Activated CD4-positive, alpha-beta T cell treated with anti-CD3 and anti-CD28 coated beads for 36 hours (primary cell): ENCODE measurements at regions of chr4 and their contacts with region 1.

Region 1: GRCh38 chr4:183659029-183659871 is at the starts of genes RWDD4 and TRAPPC11:
- DNase-seq: peak; percentile 97
- ATAC-seq: peak; percentile 100
- H3K4me3 Mint-ChIP-seq: peak within 1 kb of the TSS; percentile 97
- H3K27ac Mint-ChIP-seq: peak within 1 kb of the TSS; percentile 95
- H3K4me1 Mint-ChIP-seq: peaks cover 35% of the 10 kb centered on the region
- H3K27me3 Mint-ChIP-seq: no peaks in the 10 kb centered on the region
- total RNA-seq, gene RWDD4: 19.4 to 26.5 TPM
- total RNA-seq, gene TRAPPC11: 27.7 to 37.9 TPM

Region 2: GRCh38 chr4:182917182-182918043 is 741.8 kb before region 1 on chr4 and contains the start of gene DCTD:
- CTCF ChIA-PET with region 1: no interaction called
- POLR2A ChIA-PET with region 1: no interaction called
- intact Hi-C with region 1: loop called in 1 of 2 experiments (anchors 10 kb)
- DNase-seq: peak; percentile 89
- ATAC-seq: peak; percentile 69
- H3K4me3 Mint-ChIP-seq: peak within 1 kb of the TSS; percentile 79
- H3K27ac Mint-ChIP-seq: peak within 1 kb of the TSS; percentile 95
- H3K4me1 Mint-ChIP-seq: peaks cover 48% of the 10 kb centered on the region
- H3K27me3 Mint-ChIP-seq: no peaks in the 10 kb centered on the region
- total RNA-seq, gene DCTD: 119 to 128 TPM

Region 3: GRCh38 chr4:183444214-183445066 is 214.8 kb before region 1 on chr4 and contains the start of gene CDKN2AIP:
- CTCF ChIA-PET with region 1: no interaction called
- POLR2A ChIA-PET with region 1: no interaction called
- intact Hi-C with region 1: loop called (anchors 1 kb)
- DNase-seq: peak; percentile 95
- ATAC-seq: peak; percentile 87
- H3K4me3 Mint-ChIP-seq: peak within 1 kb of the TSS; percentile 97
- H3K27ac Mint-ChIP-seq: peak within 1 kb of the TSS; percentile 97
- H3K4me1 Mint-ChIP-seq: peaks cover 42% of the 10 kb centered on the region
- H3K27me3 Mint-ChIP-seq: no peaks in the 10 kb centered on the region
- total RNA-seq, gene CDKN2AIP: 19.4 to 22.8 TPM

Region 4: GRCh38 chr4:183722731-183723560 is 63.7 kb after region 1 on chr4:
- CTCF ChIA-PET with region 1: no interaction called
- POLR2A ChIA-PET with region 1: no interaction called
- intact Hi-C with region 1: loop called in 1 of 2 experiments (anchors 2 kb)
- DNase-seq: peak; percentile 60
- ATAC-seq: peak; percentile 57
- H3K4me3 Mint-ChIP-seq: peak overlapping the region; percentile 56
- H3K27ac Mint-ChIP-seq: peak overlapping the region; percentile 10
- H3K4me1 Mint-ChIP-seq: peaks cover 12% of the 10 kb centered on the region
- H3K27me3 Mint-ChIP-seq: no peaks in the 10 kb centered on the region

Region 5: DNA sequence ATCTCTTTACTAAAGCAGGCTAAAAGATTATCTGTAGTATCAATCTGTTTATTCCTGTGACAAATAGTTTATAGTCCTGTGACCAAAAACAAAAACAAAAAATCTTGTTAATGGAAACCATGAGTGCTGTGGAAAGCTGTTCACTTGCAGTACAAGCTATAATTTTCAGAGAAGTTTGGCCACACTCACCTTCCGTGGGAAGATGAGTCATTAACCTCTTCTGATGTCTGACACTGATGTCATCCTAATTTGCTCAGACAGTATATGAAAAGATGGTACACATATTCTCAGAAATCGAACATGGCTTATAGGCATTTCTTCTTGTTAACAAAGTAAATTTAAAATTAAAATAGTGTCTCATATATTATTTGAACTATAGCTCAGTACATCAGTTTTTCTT is 578.4 kb after region 1 on chr4:
- CTCF ChIA-PET with region 1: no interaction called
- POLR2A ChIA-PET with region 1: no interaction called
- intact Hi-C with region 1: loop called in 1 of 2 experiments (anchors 10 kb)
- DNase-seq: peak; percentile 73
- ATAC-seq: peak; percentile 97
- H3K4me3 Mint-ChIP-seq: peak overlapping the region; percentile 9
- H3K27ac Mint-ChIP-seq: peak overlapping the region; percentile 84
- H3K4me1 Mint-ChIP-seq: peaks cover 28% of the 10 kb centered on the region
- H3K27me3 Mint-ChIP-seq: no peaks in the 10 kb centered on the region